SK-N-SH (cell line): ENCODE measurements at regions of chr11 and their contacts with region 1.

Region 1: GRCh38 chr11:7571640-7572000 is 57.8 kb downstream of the PPFIBP2 start:
- DNase-seq: peak; percentile 70
- H3K4me3 ChIP-seq: no peak overlapping the region; a peak in 1 of 4 replicates
- H3K27ac ChIP-seq: no peak overlapping the region; a peak in 1 of 4 replicates
- H3K4me1 ChIP-seq: peaks cover 0 to 23% of the 10 kb centered on the region in 2 experiments; a peak in 1 of 4 replicates
- H3K27me3 ChIP-seq: peaks cover 4% of the 10 kb centered on the region; the same call in 1 of the 2 replicates
- CTCF ChIP-seq: peak; percentile 95
- EP300 ChIP-seq: no peak
- RAD21 ChIP-seq: peak; percentile 96

Region 2: GRCh38 chr11:7513234-7514098 is 58.2 kb before region 1 on chr11 and contains the start of gene PPFIBP2:
- CTCF ChIA-PET with region 1: interaction called, 42 read pairs
- POLR2A ChIA-PET with region 1: interaction called, 3 read pairs
- DNase-seq: peak; percentile 96
- H3K4me3 ChIP-seq: peak within 1 kb of the TSS; percentile 63 to 76
- H3K27ac ChIP-seq: peak within 1 kb of the TSS in 1 of 2 experiments; percentile 60; a peak in 1 of 4 replicates
- H3K4me1 ChIP-seq: peaks cover 0 to 18% of the 10 kb centered on the region in 2 experiments; a peak in 1 of 4 replicates
- H3K27me3 ChIP-seq: peaks cover 9% of the 10 kb centered on the region
- CTCF ChIP-seq: peak; percentile 79
- EP300 ChIP-seq: no peak
- RAD21 ChIP-seq: peak; percentile 69
- polyA plus RNA-seq, gene PPFIBP2: 0.67 and 1.1 TPM in 2 replicates

Region 3: GRCh38 chr11:7543302-7543701 is 28.3 kb before region 1 on chr11:
- CTCF ChIA-PET with region 1: interaction called, 20 read pairs
- POLR2A ChIA-PET with region 1: no interaction called
- DNase-seq: no peak
- H3K4me3 ChIP-seq: no peak overlapping the region
- H3K27ac ChIP-seq: no peak overlapping the region
- H3K4me1 ChIP-seq: peaks cover 0 to 26% of the 10 kb centered on the region in 2 experiments; a peak in 2 of 4 replicates
- H3K27me3 ChIP-seq: no peaks in the 10 kb centered on the region; the same call in 1 of the 2 replicates
- CTCF ChIP-seq: no peak
- EP300 ChIP-seq: no peak
- RAD21 ChIP-seq: no peak

Region 4: GRCh38 chr11:7592711-7593110 is 21.1 kb after region 1 on chr11:
- CTCF ChIA-PET with region 1: interaction called, 67 read pairs
- POLR2A ChIA-PET with region 1: no interaction called
- DNase-seq: no peak
- H3K4me3 ChIP-seq: no peak overlapping the region
- H3K27ac ChIP-seq: peak overlapping the region in 1 of 2 experiments; percentile 47; a peak in 2 of 4 replicates
- H3K4me1 ChIP-seq: peaks cover 0 to 17% of the 10 kb centered on the region in 2 experiments; a peak in 2 of 4 replicates
- H3K27me3 ChIP-seq: no peaks in the 10 kb centered on the region
- CTCF ChIP-seq: no peak
- EP300 ChIP-seq: no peak
- RAD21 ChIP-seq: no peak

Region 5: GRCh38 chr11:7637447-7638157 is 66.0 kb after region 1 on chr11:
- CTCF ChIA-PET with region 1: interaction called, 359 read pairs
- POLR2A ChIA-PET with region 1: no interaction called
- DNase-seq: no peak
- H3K4me3 ChIP-seq: no peak overlapping the region
- H3K27ac ChIP-seq: peak overlapping the region in 1 of 2 experiments; percentile 66; a peak in 2 of 4 replicates
- H3K4me1 ChIP-seq: peaks cover 0 to 4% of the 10 kb centered on the region in 2 experiments; a peak in 1 of 4 replicates
- H3K27me3 ChIP-seq: no peaks in the 10 kb centered on the region
- CTCF ChIP-seq: no peak
- EP300 ChIP-seq: no peak
- RAD21 ChIP-seq: no peak

Region 6: DNA sequence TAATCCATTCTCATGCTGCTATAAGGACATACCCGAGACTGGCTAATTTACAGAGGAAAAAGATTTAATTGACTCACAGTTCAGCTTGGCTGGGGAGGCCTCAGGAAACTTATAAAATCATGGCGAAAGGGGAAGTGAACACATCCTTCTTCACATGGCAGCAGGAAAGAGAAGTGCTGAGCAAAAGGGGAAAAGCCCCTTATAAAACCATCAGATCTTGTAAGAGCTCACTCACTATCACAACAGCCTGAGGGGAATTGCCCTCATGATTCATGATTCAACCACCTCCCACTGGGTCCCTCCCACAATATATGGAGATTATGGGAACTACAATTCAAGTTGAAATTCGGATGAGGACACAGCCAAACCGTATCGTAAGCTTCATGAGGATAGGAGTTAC is 105.5 kb after region 1 on chr11:
- CTCF ChIA-PET with region 1: interaction called, 12 read pairs
- POLR2A ChIA-PET with region 1: no interaction called
- DNase-seq: no peak
- H3K4me3 ChIP-seq: no peak overlapping the region
- H3K27ac ChIP-seq: no peak overlapping the region
- H3K4me1 ChIP-seq: peaks cover 0 to 7% of the 10 kb centered on the region in 2 experiments; a peak in 1 of 4 replicates
- H3K27me3 ChIP-seq: peaks cover 24% of the 10 kb centered on the region; the same call in 1 of the 2 replicates
- CTCF ChIP-seq: no peak
- EP300 ChIP-seq: no peak
- RAD21 ChIP-seq: no peak